Activated CD4-positive, alpha-beta T cell treated with anti-CD3 and anti-CD28 coated beads for 36 hours (primary cell): ENCODE measurements at regions of chr4 and their contacts with region 1.

Region 1: DNA sequence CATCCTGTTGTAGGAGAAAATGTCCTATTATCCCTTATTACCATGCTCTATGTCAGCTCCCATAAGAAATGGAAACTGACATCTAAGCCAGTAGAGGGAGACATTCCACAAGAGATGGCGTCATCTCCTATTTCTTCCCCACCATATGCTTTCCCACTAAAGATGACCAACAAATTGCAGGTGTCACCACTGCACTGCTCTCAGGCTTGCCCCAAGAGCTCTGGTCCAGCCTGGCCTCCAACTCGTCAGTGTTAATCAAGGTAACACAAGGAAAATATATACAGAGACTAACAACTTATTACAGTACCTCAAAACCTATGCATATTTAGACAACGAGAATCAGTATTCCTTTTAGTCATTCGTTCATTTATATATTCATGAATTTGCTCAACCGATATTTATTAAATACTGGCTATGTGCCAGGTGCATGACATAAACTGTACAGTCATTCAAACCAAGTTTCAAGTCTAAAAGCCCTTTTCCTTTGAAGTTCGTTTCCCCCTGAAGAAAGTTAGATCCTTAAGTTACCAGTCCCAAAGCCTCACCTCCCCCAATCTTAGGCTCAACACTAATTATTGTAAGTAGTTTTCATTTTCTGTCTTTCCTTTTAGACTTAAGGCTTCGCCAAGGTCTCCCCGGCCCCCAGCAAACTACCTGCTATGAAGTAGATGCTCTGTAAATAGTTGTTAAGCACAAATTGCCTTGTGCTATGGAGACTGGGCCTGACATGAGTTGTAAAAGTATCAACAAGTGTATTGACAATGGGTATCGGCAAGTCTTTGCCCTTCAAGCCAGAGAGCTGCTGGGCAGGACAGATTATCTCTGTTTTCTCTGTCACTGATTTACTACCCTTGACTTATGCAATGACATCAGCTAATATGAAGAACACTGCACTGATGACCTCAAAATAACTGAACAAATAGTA is 3.1 kb upstream of the FGB start:
- DNase-seq: peak; percentile 9
- ATAC-seq: peak; percentile 42
- H3K4me3 Mint-ChIP-seq: no peak overlapping the region
- H3K27ac Mint-ChIP-seq: no peak overlapping the region
- H3K4me1 Mint-ChIP-seq: no peaks in the 10 kb centered on the region
- H3K27me3 Mint-ChIP-seq: peaks cover 7% of the 10 kb centered on the region

Region 2: GRCh38 chr4:154335588-154335987 is 224.2 kb before region 1 on chr4:
- CTCF ChIA-PET with region 1: no interaction called
- POLR2A ChIA-PET with region 1: no interaction called
- intact Hi-C with region 1: no loop called
- DNase-seq: no peak
- ATAC-seq: no peak
- H3K4me3 Mint-ChIP-seq: no peak overlapping the region
- H3K27ac Mint-ChIP-seq: no peak overlapping the region
- H3K4me1 Mint-ChIP-seq: peaks cover 11% of the 10 kb centered on the region
- H3K27me3 Mint-ChIP-seq: peaks cover 10% of the 10 kb centered on the region

Region 3: GRCh38 chr4:154618708-154619315 is 59.1 kb after region 1 on chr4:
- CTCF ChIA-PET with region 1: interaction called, 32 read pairs
- POLR2A ChIA-PET with region 1: no interaction called
- intact Hi-C with region 1: loop called in 1 of 2 experiments (anchors 1 kb)
- DNase-seq: peak; percentile 78
- ATAC-seq: peak; percentile 79
- H3K4me3 Mint-ChIP-seq: no peak overlapping the region
- H3K27ac Mint-ChIP-seq: no peak overlapping the region
- H3K4me1 Mint-ChIP-seq: peaks cover 5% of the 10 kb centered on the region
- H3K27me3 Mint-ChIP-seq: peaks cover 6% of the 10 kb centered on the region

Region 4: GRCh38 chr4:154961263-154961662 is 401.5 kb after region 1 on chr4:
- CTCF ChIA-PET with region 1: no interaction called
- POLR2A ChIA-PET with region 1: no interaction called
- intact Hi-C with region 1: no loop called
- DNase-seq: no peak
- ATAC-seq: no peak
- H3K4me3 Mint-ChIP-seq: no peak overlapping the region
- H3K27ac Mint-ChIP-seq: no peak overlapping the region
- H3K4me1 Mint-ChIP-seq: no peaks in the 10 kb centered on the region
- H3K27me3 Mint-ChIP-seq: no peaks in the 10 kb centered on the region